ENCODE measurements at regions of chr2 and their contacts with region 1.

Region 1: DNA sequence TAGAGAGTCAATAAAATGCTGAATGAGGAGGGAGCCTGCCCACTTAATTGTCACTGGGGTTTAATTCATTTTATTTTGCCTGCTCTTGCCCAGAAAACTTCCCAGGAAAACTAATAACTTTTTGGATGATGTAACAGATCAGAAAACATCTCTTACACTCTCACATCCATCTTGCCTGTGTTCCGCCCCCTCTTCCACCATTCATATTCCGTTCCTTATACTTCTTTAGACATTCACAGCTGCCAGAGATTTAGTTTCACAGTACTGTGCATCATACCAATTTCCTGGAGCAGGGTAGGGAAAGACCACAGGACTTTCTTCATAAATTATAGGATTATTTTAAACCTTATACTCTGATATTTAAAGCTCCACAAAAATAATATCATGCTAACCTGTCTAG is 776.1 kb upstream of the SOX11 start:
- DNase-seq: no peak

Region 2: DNA sequence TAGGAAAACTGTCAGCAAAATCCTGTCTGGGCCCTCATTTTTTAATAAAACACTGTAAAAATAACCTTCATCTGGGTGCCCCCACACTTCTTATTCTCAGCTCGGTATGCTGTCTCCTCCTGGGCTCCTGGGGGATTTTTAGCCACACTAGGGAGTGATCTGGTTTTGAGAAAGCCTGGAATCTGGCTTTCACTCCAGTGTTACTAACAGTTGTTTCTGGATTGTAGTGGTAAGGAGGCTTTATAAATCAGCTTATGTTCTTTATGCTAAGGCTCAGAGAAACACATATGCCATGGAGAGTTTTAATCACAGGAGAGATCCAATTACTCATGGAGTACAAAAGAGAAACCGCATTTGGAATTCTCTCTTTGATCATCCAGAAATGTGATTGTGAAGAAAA is 31.8 kb after region 1 on chr2:
- intact Hi-C with region 1: no loop called
- DNase-seq: no peak

Region 3: DNA sequence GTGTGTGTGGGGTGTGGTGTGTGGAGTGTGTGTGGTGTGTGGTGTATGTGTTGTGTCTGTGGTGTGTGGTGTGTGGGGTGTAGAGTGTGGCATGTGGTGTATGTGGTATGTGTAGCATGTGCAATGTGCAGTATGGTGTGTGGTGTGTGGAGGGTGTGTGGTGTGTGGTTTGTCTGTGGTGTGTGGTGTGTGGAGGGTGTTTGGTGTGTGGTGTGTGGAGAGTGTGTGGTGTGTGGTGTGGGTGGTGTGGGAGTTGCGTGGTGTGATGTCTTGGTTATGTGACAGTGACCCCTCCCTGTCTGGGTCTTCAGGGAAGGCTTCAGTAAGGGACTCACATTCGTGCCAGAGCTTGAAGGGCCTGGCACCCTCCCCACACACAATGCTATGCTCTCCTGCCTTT is 57.9 kb after region 1 on chr2:
- intact Hi-C with region 1: loop called in 1 of 2 experiments (anchors 2 kb)
- DNase-seq: no peak

Region 4: DNA sequence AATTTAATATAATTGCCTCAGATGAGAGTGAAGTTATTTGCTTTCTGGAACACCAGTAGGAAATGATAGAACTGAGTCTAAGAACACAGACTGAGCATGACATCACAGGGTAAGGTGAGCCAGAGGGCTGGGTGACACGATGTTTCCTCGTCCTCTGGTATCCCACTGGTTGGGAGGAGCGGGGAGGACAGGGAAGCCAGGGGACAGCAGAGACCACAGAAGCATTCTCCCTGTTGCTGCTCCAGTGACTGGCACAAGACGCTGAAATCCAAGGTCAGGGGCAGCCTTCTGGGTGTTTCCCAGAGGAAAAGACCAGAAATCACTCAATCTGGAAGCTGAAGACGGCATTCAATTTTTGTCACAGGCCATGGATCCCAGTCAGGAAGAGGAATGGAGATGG is 412.7 kb after region 1 on chr2:
- intact Hi-C with region 1: no loop called
- DNase-seq: no peak